ENCODE measurements at regions of chr14 and their contacts with region 1.

Region 1: GRCh38 chr14:89303457-89304435 is 113.3 kb downstream of the FOXN3 start:
- DNase-seq: peak; percentile 57
- ATAC-seq: peak; percentile 63
- H3K4me3 Mint-ChIP-seq: peak overlapping the region; percentile 89
- H3K27ac Mint-ChIP-seq: peak overlapping the region; percentile 99
- H3K4me1 Mint-ChIP-seq: peaks cover 77% of the 10 kb centered on the region
- H3K27me3 Mint-ChIP-seq: no peaks in the 10 kb centered on the region
- CTCF ChIP-seq: no peak

Region 2: DNA sequence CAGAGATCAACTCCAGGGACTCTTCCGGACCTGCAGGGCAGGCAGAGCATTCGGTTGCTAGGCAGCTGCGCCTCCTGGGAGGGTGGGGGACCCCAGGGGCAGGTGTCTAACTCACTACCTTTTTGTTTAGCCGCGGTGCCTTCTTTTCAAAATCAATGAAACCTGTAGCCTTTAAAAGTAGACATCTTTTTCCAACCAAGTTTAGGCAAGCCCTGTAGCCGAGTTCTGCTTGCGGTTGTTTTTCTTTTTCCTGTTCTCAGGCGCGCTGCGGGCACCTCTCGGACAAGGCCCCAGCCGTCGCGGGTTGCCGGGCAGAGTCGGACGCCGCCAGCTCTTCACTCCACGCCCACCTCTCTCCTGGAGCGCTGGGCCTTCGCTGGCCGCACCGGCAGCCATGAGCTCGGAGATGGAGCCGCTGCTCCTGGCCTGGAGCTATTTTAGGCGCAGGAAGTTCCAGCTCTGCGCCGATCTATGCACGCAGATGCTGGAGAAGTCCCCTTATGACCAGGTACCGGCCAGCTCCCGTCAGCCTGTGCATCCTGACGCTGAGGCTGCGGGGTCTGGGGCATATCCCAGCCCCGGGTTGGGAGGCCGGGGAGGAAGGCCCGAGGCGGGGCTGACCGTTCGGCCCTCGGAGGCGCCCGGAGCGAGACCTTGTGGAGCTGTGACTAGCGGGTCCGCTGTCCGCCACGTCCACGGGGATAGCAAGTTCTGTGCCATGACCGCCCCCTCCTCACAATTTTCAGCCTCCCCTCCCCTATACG is 479.2 kb before region 1 on chr14 and contains the start of gene TTC8:
- CTCF ChIA-PET with region 1: no interaction called
- POLR2A ChIA-PET with region 1: no interaction called
- intact Hi-C with region 1: loop called (anchors 10 kb)
- DNase-seq: peak; percentile 77
- ATAC-seq: peak; percentile 97
- H3K4me3 Mint-ChIP-seq: peak within 1 kb of the TSS; percentile 88
- H3K27ac Mint-ChIP-seq: peak within 1 kb of the TSS; percentile 100
- H3K4me1 Mint-ChIP-seq: peaks cover 14% of the 10 kb centered on the region
- H3K27me3 Mint-ChIP-seq: peaks cover 11% of the 10 kb centered on the region
- CTCF ChIP-seq: no peak
- total RNA-seq, gene TTC8: 4.8 and 6.0 TPM in 2 replicates

Region 3: GRCh38 chr14:89276424-89276975 is 27.2 kb before region 1 on chr14:
- CTCF ChIA-PET with region 1: interaction called, 3 read pairs
- POLR2A ChIA-PET with region 1: interaction called, 5 read pairs
- intact Hi-C with region 1: loop called (anchors 2 kb)
- DNase-seq: peak; percentile 41
- ATAC-seq: peak; percentile 87
- H3K4me3 Mint-ChIP-seq: peak overlapping the region; percentile 52
- H3K27ac Mint-ChIP-seq: peak overlapping the region; percentile 89
- H3K4me1 Mint-ChIP-seq: peaks cover 55% of the 10 kb centered on the region
- H3K27me3 Mint-ChIP-seq: no peaks in the 10 kb centered on the region
- CTCF ChIP-seq: no peak

Region 4: GRCh38 chr14:89351516-89352404 is 48.0 kb after region 1 on chr14:
- CTCF ChIA-PET with region 1: interaction called, 3 read pairs
- POLR2A ChIA-PET with region 1: interaction called, 7 read pairs
- intact Hi-C with region 1: loop called (anchors 1 kb)
- DNase-seq: no peak
- ATAC-seq: peak; percentile 77
- H3K4me3 Mint-ChIP-seq: peak overlapping the region; percentile 77
- H3K27ac Mint-ChIP-seq: peak overlapping the region; percentile 94
- H3K4me1 Mint-ChIP-seq: peaks cover 63% of the 10 kb centered on the region
- H3K27me3 Mint-ChIP-seq: no peaks in the 10 kb centered on the region
- CTCF ChIP-seq: no peak

Region 5: DNA sequence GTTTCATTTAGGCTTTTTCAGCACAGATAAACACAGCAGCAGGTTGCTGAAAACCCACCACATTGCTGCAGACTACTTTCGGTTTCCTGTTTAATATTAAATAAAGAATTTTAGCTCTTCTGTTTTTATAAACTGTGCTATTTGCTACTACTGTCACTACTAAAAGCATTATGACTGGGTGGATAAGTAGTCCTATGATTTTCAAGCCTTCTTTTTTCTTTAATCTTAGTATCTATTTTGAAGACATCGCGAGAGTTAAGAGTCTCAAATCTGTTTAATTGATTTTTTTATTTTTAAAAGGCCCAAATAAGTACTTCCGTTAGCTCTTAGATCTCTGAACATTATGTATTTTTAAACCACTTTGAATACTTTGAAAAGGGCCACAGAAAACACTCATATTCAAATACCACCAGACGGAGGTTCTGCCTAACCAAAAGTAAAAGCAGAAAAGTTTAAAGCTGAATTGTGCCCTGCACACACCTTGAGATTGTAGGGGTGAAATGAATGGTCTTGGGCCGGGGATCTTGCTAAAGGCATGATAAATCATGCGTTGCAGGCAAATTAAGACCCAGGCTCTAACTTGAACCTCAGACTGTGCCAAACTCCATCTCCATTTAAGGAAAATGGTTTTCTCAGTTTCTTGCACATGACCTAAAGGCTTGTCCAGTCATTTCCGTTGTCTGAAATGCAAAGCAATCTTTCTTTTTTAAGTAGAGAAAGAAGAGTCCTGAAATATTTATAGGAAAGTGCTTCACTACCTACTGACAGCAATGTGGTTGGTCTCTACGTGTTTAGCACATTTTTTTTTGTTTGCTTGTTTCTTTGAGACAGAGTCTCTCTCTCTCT is 126.9 kb after region 1 on chr14:
- CTCF ChIA-PET with region 1: interaction called, 4 read pairs
- POLR2A ChIA-PET with region 1: interaction called, 20 read pairs
- intact Hi-C with region 1: loop called (anchors 1 kb)
- DNase-seq: no peak
- ATAC-seq: peak; percentile 93
- H3K4me3 Mint-ChIP-seq: peak overlapping the region; percentile 80
- H3K27ac Mint-ChIP-seq: peak overlapping the region; percentile 86
- H3K4me1 Mint-ChIP-seq: peaks cover 83% of the 10 kb centered on the region
- H3K27me3 Mint-ChIP-seq: no peaks in the 10 kb centered on the region
- CTCF ChIP-seq: no peak

Region 6: GRCh38 chr14:89720741-89721315 is 417.1 kb after region 1 on chr14:
- CTCF ChIA-PET with region 1: no interaction called
- POLR2A ChIA-PET with region 1: interaction called, 3 read pairs
- intact Hi-C with region 1: loop called (anchors 5 kb)
- DNase-seq: peak; percentile 45
- ATAC-seq: peak; percentile 90
- H3K4me3 Mint-ChIP-seq: peak overlapping the region; percentile 69
- H3K27ac Mint-ChIP-seq: peak overlapping the region; percentile 95
- H3K4me1 Mint-ChIP-seq: peaks cover 66% of the 10 kb centered on the region
- H3K27me3 Mint-ChIP-seq: no peaks in the 10 kb centered on the region
- CTCF ChIP-seq: no peak

Measured in activated B cell treated with CpG ODN at 0.5 μM for 24 hours (primary cell).